Esophagus squamous epithelium (tissue), 5 donors: ENCODE measurements at regions of chr16 and their contacts with region 1.

Region 1: DNA sequence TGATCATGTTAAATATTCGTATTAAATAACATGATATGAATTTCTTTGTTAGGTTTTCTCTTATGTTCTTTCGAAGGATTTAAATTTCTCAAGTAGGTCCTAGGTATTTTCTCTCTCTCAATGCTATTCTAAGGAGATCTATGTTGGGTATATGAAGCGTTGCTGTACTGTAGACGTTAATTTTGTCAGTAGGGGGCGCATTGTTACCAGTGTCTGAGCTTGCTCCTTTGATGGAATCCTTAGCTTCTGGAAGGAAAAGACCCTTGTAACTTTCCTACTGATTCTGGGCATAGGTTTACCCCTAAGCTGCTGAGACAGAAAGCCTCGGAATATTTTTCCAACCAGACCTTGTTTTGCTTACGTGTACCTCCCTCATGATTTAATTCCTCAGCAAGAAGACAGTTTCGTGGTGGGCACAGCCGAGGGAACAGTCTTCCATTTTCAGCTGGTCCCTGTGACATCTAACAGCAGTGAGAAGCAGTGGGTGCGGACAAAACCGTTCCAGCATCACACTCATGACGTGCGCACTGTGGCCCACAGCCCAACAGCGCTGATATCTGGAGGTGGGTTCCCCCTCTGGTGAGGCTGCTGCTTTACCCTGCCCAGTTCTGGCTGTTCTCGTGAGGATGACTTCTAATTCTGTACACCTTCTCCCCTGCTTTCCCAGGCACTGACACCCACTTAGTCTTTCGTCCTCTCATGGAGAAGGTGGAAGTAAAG is 17.9 kb downstream of the UTP4 start:
- DNase-seq: no peak
- H3K4me3 ChIP-seq: no peak overlapping the region
- H3K27ac ChIP-seq: peak overlapping the region in 1 of 4 donors; percentile 20
- H3K4me1 ChIP-seq: no peaks in the 10 kb centered on the region
- H3K27me3 ChIP-seq: no peaks in the 10 kb centered on the region
- CTCF ChIP-seq: peak; percentile 43 to 81 (median 74)
- POLR2A ChIP-seq: no peak

Region 2: DNA sequence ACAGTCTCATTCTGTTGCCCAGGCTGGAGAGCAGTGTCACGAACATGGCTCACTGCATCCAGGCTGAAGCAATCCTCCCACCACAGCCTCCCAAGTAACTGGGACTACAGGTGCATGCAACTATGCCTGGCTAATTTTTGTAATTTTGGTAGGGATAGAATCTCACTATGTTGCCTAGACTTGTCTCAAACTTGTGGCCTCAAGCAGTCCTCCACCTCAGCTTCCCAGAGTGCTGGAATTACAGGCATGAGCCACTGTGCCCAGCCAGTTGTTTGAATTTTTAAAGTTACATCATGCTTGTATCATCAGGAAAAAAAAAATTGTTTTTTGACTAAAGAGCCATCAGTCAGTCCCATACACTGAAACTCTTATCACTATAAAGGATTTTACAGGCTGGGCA is 143.7 kb after region 1 on chr16:
- intact Hi-C with region 1: loop called (anchors 5 kb)
- DNase-seq: no peak
- H3K4me3 ChIP-seq: no peak overlapping the region
- H3K27ac ChIP-seq: peak overlapping the region in 1 of 4 donors; percentile 9
- H3K4me1 ChIP-seq: peaks cover 0 to 14% (median 0%) of the 10 kb centered on the region in 3 donors
- H3K27me3 ChIP-seq: no peaks in the 10 kb centered on the region
- CTCF ChIP-seq: no peak
- POLR2A ChIP-seq: no peak